PC-3 (cell line): ENCODE measurements at regions of chr10 and their contacts with region 1.

Region 1: DNA sequence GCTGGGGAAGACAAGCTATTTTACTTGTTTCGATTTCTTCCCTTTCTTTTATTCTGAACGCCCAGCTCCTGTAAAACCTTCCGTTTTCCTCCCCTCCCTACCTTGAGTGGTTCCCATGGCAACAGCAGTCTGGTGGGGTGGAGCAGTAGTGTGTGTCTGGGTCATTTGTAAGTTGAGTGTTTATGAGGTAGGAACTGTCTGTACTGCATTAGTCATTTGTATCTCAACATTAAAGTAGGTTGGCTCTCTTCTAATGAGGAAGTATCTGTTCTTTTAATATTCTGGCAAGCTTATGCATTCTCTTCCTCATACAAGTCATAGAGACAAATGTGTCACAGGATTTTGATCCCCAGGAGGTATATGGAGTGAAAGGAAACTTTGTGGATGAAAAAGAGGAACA is 85.3 kb upstream of the CCDC6 start:
- DNase-seq: peak; percentile 96
- ATAC-seq: peak; percentile 97
- H3K4me3 ChIP-seq: peak overlapping the region; percentile 39; the same call in 1 of the 2 replicates
- H3K27ac ChIP-seq: peak overlapping the region; percentile 75
- H3K4me1 ChIP-seq: peaks cover 32% of the 10 kb centered on the region
- H3K27me3 ChIP-seq: no peaks in the 10 kb centered on the region
- CTCF ChIP-seq: no peak

Region 2: GRCh38 chr10:60008816-60009215 is 17.2 kb after region 1 on chr10:
- CTCF ChIA-PET with region 1: no interaction called
- POLR2A ChIA-PET with region 1: no interaction called
- intact Hi-C with region 1: loop called (anchors 1 kb)
- DNase-seq: peak; percentile 74
- ATAC-seq: peak; percentile 79
- H3K4me3 ChIP-seq: no peak overlapping the region
- H3K27ac ChIP-seq: peak overlapping the region; percentile 48
- H3K4me1 ChIP-seq: peaks cover 17% of the 10 kb centered on the region
- H3K27me3 ChIP-seq: no peaks in the 10 kb centered on the region
- CTCF ChIP-seq: peak; percentile 60